ENCODE measurements at regions of chr4 and their contacts with region 1.

Region 1: DNA sequence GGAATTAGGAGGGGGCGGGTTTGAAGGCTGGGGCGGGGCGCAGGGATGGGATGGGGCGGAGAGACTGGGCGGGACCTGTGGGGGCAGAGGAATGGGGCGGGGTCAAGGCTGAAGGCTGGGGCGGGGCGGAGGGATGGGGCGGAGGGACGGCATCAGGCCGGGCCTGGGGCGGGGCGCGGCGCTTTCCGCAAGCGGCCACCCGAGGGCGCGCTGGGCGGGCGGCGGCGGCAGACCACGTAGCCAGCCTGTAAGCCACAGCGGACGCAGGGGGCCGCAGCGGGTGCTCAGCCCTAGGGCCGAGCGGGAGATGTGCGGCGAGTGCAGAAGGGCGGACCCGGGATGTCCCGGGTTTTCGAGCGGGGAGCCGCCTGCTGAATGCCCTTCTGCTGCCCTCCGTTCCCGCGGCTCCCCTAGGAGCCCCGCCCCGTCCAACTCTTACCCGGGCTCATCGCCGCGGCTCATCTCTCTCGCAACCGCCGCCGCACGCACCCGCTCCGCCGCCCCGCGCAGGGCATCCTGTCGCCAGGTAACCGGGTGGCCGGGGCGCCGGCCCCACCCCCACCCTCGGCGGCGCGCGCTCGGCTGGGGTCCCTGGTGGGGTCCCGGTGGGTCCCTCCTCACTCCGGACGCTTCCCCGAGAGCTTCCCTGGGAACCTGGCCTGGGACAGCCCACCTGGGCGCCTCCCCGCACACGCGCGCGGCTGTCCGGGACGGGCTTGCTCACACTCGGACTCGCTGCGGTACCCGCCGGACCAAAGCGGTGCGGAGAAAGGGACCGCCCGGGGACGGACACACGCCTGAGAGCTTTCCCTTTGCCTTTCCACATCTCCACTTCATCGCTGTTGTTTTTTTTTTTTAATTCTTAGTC is at the start of gene CCDC110:
- DNase-seq: peak; percentile 82 to 97 (median 92)
- H3K4me3 ChIP-seq: peak within 1 kb of the TSS; percentile 69 to 99 (median 91)
- H3K27ac ChIP-seq: peak within 1 kb of the TSS in 58 of 59 donors; percentile 61 to 93 (median 83)
- H3K27me3 ChIP-seq: no peaks in the 10 kb centered on the region
- CTCF ChIP-seq: peak in 55 of 56 donors; percentile 29 to 88 (median 71)
- total RNA-seq, gene CCDC110: 1.1 to 7.8 (median 3.4) TPM

Region 2: DNA sequence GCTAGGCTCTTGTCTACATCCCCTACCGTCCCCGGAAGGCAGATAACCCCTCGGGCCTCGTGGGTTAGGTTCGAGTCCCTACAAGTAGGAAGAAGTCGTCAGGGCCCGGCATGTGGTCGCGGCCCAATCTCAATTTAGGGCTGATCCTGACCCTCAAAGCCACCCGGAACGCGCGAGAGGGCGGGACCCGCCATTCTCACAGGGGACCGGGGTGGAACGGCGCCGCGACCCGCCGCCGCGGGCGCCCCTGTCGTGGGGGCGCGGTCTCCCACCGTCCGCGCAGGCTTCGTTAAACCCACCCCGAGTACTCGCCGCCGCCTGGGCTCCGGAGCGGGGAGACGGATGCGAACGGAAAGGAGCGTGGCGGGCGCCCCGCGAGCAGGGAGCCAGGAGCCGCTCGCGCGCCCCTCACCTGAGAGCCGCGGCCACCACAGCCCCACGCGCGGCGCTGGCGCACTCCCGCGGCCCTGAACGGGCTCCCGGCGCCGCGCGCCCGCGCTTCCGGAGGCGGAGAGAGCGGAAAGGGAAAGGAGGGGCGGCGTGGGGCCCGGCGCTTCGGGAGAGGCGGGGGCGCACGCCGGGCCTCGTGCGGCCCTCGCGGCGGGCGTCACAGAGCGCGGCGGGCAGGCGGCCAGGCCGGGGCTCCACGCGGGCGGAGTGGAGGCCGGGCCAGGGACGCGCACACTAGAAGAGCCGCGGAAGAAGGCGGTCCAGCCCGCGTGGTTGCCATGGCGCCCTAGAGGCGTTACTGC is 267.8 kb before region 1 on chr4 and contains the start of gene CFAP97:
- intact Hi-C with region 1: loop called (anchors 5 kb)
- DNase-seq: peak; percentile 81 to 92 (median 88)
- H3K4me3 ChIP-seq: peak within 1 kb of the TSS; percentile 62 to 94 (median 83)
- H3K27ac ChIP-seq: peak within 1 kb of the TSS; percentile 83 to 99 (median 95)
- H3K27me3 ChIP-seq: no peaks in the 10 kb centered on the region
- CTCF ChIP-seq: peak in 27 of 56 donors; percentile 3 to 60 (median 24)
- total RNA-seq, gene CFAP97: 16.8 to 37.2 (median 26.7) TPM

Region 3: DNA sequence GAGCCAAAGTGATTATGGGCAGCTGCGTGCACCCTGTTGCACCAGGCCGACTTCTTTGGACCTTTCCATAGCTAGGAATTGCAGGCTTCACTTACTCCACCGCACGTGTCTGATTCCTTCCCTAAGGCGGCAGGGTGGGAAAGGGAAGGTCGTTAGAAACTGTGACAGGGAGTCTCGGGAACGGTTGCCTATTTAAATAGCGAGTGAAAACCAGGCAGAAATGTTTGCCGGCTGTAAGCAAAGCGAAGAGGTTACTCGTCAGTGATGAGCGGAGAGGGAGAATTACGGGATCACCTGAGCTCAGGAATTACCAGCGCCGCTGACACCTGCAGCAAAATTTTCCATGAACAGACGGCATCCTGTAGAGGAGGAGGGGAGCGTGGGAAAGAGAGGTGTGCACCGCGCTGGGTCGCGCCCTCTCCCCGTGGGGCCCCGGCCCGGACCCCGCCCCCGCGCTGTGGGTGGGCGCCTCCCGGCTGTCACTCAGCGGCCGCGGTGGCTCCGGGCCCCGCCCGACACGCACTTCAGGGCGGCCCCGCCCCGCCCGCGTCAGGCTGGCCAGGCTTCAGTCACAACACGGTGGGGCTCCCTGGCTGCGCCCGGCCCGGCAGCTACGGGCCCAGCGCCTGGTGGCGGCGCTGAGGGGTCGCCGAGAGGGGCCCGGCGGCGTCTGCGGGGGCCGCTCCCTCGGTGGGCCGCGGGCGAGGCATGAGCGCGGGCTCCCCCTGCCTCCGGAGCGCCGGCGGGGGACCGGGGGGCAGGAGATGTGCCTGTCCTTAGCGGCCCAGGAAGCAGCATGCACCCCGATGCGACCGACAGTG is 262.2 kb before region 1 on chr4 and contains the start of gene SNX25:
- intact Hi-C with region 1: loop called (anchors 5 kb)
- DNase-seq: peak; percentile 74 to 96 (median 87)
- H3K4me3 ChIP-seq: peak within 1 kb of the TSS; percentile 61 to 87 (median 75)
- H3K27ac ChIP-seq: peak within 1 kb of the TSS; percentile 40 to 93 (median 78)
- H3K27me3 ChIP-seq: no peaks in the 10 kb centered on the region
- CTCF ChIP-seq: peak in 29 of 56 donors; percentile 8 to 70 (median 34)
- total RNA-seq, gene SNX25: 14.6 to 37.3 (median 24.4) TPM

Region 4: GRCh38 chr4:185395956-185396723 is 75.3 kb before region 1 on chr4:
- intact Hi-C with region 1: loop called (anchors 2 kb)
- DNase-seq: peak; percentile 96 to 99 (median 98)
- H3K4me3 ChIP-seq: peak overlapping the region; percentile 52 to 100 (median 87)
- H3K27ac ChIP-seq: peak overlapping the region; percentile 92 to 100 (median 100)
- H3K27me3 ChIP-seq: no peaks in the 10 kb centered on the region
- CTCF ChIP-seq: peak in 14 of 56 donors; percentile 5 to 28 (median 14)

Region 5: GRCh38 chr4:185425647-185426352 is 45.7 kb before region 1 on chr4 and contains the start of gene UFSP2:
- intact Hi-C with region 1: loop called (anchors 2 to 5 kb)
- DNase-seq: peak; percentile 79 to 94 (median 88)
- H3K4me3 ChIP-seq: peak within 1 kb of the TSS; percentile 64 to 99 (median 89)
- H3K27ac ChIP-seq: peak within 1 kb of the TSS; percentile 79 to 100 (median 99)
- H3K27me3 ChIP-seq: no peaks in the 10 kb centered on the region
- CTCF ChIP-seq: peak in 23 of 56 donors; percentile 6 to 49 (median 15)
- total RNA-seq, gene UFSP2: 15.1 to 59.4 (median 31.0) TPM

Region 6: GRCh38 chr4:185534866-185535611 is 63.6 kb after region 1 on chr4 and contains the start of gene PDLIM3:
- intact Hi-C with region 1: loop called in 1 of 2 experiments (anchors 5 kb)
- DNase-seq: peak in 7 of 10 donors; percentile 12 to 75 (median 54)
- H3K4me3 ChIP-seq: peak within 1 kb of the TSS; percentile 49 to 88 (median 75)
- H3K27ac ChIP-seq: peak within 1 kb of the TSS in 42 of 59 donors; percentile 1 to 83 (median 60)
- H3K27me3 ChIP-seq: peaks cover 0 to 30% (median 5%) of the 10 kb centered on the region in 45 donors
- CTCF ChIP-seq: peak in 14 of 56 donors; percentile 6 to 47 (median 19)
- total RNA-seq, gene PDLIM3: 6.9 to 29.7 (median 13.2) TPM

Region 7: DNA sequence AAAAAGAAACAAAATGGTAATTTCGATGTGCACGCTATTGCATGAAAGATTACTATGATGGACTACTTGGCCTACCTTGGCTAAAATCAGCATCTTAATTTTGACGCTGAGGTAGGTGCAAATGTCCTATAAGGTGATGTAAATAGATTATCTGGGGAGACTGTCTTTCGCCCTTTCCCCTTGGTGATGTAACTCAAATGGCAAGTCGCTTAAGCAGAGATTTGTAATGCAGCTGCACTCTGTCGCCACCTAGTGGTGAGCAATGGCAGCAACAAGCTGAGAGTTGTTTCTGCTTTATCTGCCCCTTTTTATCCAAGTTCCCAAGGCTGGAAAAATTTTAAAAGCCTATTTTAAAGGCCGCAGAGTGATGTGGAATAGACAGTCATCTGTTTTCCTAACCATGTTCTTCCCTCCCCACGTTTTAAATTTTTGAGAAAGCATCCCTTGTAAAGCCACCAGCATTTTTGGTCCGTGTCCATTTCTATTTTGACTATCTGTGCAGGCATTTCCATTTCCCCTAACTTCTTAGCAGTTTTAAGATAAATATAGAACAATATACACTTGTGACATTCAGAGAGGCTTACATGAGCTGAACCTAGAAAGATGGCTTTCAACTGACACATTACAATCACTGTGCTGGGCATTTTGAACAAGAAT is 126.2 kb after region 1 on chr4:
- intact Hi-C with region 1: loop called (anchors 1 to 2 kb)
- DNase-seq: peak in 9 of 10 donors; percentile 59 to 86 (median 76)
- H3K4me3 ChIP-seq: peak overlapping the region in 30 of 59 donors; percentile 0 to 57 (median 24)
- H3K27ac ChIP-seq: peak overlapping the region in 20 of 59 donors; percentile 2 to 66 (median 23)
- H3K27me3 ChIP-seq: no peaks in the 10 kb centered on the region
- CTCF ChIP-seq: peak; percentile 93 to 100 (median 99)

Region 8: GRCh38 chr4:186104114-186104889 is 632.8 kb after region 1 on chr4 and contains the start of gene FAM149A:
- intact Hi-C with region 1: no loop called
- DNase-seq: peak in 2 of 10 donors; percentile 15 to 44
- H3K4me3 ChIP-seq: peak within 1 kb of the TSS; percentile 3 to 66 (median 49)
- H3K27ac ChIP-seq: peak within 1 kb of the TSS in 27 of 59 donors; percentile 4 to 78 (median 36)
- H3K27me3 ChIP-seq: peaks cover 0 to 49% (median 20%) of the 10 kb centered on the region in 45 donors
- CTCF ChIP-seq: no peak
- total RNA-seq, gene FAM149A: 11.1 to 45.5 (median 27.6) TPM